ENCODE measurements at regions of chr10 and their contacts with region 1.

Region 1: GRCh38 chr10:75401569-75402485 is at the start of gene ZNF503:
- DNase-seq: peak; percentile 73
- H3K4me3 Mint-ChIP-seq: peak within 1 kb of the TSS; percentile 74
- H3K27ac Mint-ChIP-seq: no peak within 1 kb of the TSS
- H3K4me1 Mint-ChIP-seq: peaks cover 24% of the 10 kb centered on the region
- H3K27me3 Mint-ChIP-seq: peaks cover 53% of the 10 kb centered on the region
- total RNA-seq, gene ZNF503: 0.38 to 0.56 TPM

Region 2: DNA sequence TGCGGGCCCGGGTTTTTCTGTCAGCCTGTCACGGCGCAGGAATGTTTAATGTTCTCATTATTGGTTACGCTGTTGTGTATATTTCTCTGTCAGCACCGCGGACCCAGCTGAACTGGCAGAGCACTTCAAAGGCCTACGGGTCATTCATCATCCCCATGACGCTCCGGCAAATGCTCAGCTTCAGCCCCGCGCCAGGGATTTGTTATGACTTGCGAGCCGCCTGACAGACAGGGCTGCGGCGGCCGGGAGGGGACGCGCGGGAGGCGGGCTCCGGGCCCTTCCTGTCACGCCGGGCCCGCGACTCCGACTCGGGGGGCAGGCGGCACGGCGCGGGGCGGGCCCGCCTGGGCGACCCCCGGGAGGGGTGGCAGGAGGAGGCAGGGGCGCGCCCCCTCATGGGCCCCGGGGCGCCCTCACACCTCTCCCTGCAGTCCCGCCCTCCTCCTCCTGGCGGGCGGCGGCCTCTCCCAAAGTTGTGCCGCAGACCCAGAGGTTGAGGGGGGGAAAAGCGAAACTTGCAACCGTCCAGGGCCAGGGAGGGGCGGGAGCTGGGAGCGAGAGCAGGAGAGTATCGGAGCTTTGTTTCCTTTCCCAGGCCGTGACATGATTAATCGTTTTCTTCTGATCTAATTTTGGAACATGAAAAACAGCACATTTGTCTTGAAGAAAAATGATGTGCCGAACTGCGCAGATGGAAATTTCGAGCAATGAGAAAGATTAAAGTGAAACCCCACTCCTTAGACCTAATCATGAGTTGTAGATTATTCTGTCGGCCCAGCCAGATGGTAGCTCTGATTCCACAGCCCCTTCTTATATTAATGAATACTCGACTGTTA is 106.7 kb before region 1 on chr10:
- CTCF ChIA-PET with region 1: interaction called, 4 read pairs
- POLR2A ChIA-PET with region 1: no interaction called
- intact Hi-C with region 1: loop called (anchors 5 kb)
- DNase-seq: peak; percentile 87
- H3K4me3 Mint-ChIP-seq: peak overlapping the region; percentile 46
- H3K27ac Mint-ChIP-seq: no peak overlapping the region
- H3K4me1 Mint-ChIP-seq: peaks cover 5% of the 10 kb centered on the region
- H3K27me3 Mint-ChIP-seq: peaks cover 9% of the 10 kb centered on the region

Region 3: GRCh38 chr10:75375838-75376237 is 26.0 kb before region 1 on chr10:
- CTCF ChIA-PET with region 1: no interaction called
- POLR2A ChIA-PET with region 1: no interaction called
- intact Hi-C with region 1: no loop called
- DNase-seq: no peak
- H3K4me3 Mint-ChIP-seq: no peak overlapping the region
- H3K27ac Mint-ChIP-seq: no peak overlapping the region
- H3K4me1 Mint-ChIP-seq: no peaks in the 10 kb centered on the region
- H3K27me3 Mint-ChIP-seq: peaks cover 1% of the 10 kb centered on the region

Region 4: GRCh38 chr10:75922435-75922834 is 520.6 kb after region 1 on chr10:
- CTCF ChIA-PET with region 1: no interaction called
- POLR2A ChIA-PET with region 1: no interaction called
- intact Hi-C with region 1: loop called (anchors 10 kb)
- DNase-seq: no peak
- H3K4me3 Mint-ChIP-seq: no peak overlapping the region
- H3K27ac Mint-ChIP-seq: no peak overlapping the region
- H3K4me1 Mint-ChIP-seq: no peaks in the 10 kb centered on the region
- H3K27me3 Mint-ChIP-seq: peaks cover 3% of the 10 kb centered on the region

Region 5: DNA sequence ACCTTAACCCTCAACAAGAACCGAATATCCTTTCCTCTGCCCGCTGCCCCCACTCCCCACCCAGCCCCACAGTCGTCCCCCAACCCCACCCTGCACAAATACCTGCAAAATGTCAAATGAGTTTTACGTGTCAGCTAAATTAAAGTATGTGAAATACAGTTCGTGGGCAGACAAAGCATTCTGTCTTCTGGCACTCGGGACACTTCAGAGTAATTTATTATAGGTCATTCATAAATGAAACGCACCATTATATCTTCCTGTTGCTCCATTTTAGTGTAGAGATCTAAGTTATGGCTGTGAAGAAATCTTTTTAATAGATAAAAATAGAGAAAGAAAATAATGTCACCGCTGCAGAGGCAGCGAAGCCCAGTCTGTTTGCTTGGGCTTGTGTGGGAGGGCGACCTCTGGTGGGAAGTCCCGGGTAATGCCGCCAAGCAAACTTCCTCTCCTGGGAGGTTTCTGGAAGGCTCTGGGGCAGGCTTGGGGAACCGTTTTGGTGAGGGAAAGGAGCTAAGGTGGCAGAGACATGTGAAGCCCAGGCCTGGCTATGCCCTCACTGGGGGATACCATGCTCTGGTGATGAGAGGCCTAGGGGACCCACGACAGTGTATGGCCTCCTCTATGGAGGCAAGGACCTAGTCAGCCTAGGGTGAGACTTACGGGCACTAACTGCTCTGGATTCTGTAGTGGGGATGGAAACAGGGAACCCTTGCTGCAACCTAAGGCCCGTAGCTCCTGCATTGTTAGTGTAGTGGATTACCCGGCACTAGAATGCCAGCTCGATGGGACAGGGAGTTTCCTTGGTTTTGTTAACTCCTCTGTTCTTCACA is 634.5 kb after region 1 on chr10:
- CTCF ChIA-PET with region 1: interaction called, 3 read pairs
- POLR2A ChIA-PET with region 1: no interaction called
- intact Hi-C with region 1: loop called (anchors 5 kb)
- DNase-seq: peak; percentile 57
- H3K4me3 Mint-ChIP-seq: no peak overlapping the region
- H3K27ac Mint-ChIP-seq: no peak overlapping the region
- H3K4me1 Mint-ChIP-seq: no peaks in the 10 kb centered on the region
- H3K27me3 Mint-ChIP-seq: peaks cover 1% of the 10 kb centered on the region

Region 6: GRCh38 chr10:76547352-76547972 is 1145.6 kb after region 1 on chr10:
- CTCF ChIA-PET with region 1: no interaction called
- POLR2A ChIA-PET with region 1: no interaction called
- intact Hi-C with region 1: loop called (anchors 5 kb)
- DNase-seq: peak; percentile 57
- H3K4me3 Mint-ChIP-seq: no peak overlapping the region
- H3K27ac Mint-ChIP-seq: no peak overlapping the region
- H3K4me1 Mint-ChIP-seq: no peaks in the 10 kb centered on the region
- H3K27me3 Mint-ChIP-seq: no peaks in the 10 kb centered on the region